ENCODE measurements at regions of chr1 and their contacts with region 1.

Region 1: DNA sequence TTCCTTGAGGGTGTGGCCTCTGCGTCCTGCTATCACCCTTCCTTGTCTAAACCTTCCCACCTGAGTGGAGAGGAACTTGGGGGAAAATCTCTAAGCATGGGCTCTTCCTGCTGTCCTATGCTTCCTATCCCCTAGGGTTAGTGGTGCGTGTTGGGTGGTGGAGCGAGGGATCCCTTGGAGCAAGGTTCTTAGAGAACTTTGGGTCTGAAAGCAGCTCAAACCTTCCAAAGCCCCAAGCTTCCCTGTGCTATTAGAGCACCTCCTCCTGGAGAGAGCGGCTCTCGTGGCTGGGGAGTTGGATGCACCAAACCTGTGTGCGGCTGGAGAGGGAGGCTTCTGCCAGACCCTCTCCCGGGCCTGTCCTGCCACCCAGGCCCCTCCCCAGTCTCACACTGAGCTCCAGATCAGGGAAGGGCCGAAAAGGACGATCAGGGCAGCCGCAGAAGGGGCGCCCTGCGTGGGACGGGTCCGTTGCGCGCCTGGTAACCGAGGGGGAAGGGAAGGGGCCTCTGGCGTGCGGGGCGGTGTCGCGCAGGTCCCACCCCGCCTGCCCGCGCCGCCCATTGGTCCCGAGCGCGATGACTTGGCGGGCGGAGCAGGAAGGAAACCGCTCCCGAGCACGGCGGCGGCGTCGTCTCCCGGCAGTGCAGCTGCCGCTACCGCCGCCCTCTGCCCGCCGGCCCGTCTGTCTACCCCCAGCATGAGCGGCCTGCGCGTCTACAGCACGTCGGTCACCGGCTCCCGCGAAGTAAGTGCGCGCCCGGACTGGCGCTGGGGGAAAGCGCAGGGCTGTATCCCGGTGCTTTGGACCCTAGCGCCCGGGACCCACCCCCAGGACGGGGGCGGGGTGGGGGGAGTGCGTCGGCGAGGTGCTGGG is at the start of gene SH3BGRL3:
- DNase-seq: peak; percentile 76
- ATAC-seq: peak; percentile 71
- H3K4me3 Mint-ChIP-seq: peak within 1 kb of the TSS; percentile 85
- H3K27ac Mint-ChIP-seq: peak within 1 kb of the TSS; percentile 78
- H3K4me1 Mint-ChIP-seq: peaks cover 40% of the 10 kb centered on the region
- H3K27me3 Mint-ChIP-seq: no peaks in the 10 kb centered on the region
- CTCF ChIP-seq: no peak
- total RNA-seq, gene SH3BGRL3: 70.8 to 92.9 TPM (median 92.3 TPM) in 3 replicates

Region 2: DNA sequence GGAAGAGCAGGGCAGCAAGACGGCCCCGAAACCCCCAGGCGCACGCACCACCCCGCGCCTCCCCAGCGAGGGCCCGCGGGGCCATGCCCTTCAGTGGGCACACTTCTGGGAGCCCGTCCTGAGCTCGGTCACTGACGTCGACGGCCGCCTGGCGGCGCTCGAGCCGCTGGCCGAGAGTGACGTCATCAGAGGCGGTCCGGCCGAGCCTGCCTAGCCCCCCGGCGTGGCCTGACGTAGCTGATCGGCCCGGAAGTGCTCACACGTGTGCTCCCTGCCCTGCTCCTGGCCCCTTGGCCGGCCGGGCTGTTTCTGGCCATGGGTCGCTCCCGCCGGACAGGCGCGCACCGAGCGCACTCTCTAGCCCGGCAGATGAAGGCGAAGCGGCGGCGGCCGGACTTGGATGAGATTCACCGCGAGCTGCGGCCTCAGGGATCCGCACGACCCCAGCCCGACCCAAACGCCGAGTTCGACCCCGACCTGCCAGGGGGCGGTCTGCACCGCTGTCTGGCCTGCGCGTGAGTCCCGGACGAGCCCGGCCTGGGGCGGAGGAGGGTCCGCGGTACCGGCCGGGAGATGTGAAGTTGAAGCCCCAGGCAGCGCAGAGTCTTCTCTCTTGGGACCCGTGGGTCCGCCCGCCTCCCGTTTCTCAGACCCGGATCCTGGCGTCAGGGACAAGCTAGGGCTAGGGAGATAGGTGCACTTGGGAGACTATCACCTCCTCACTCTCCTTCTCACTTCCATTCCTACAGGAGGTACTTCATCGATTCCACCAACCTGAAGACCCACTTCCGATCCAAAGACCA is 109.8 kb before region 1 on chr1 and contains the start of gene ZNF593:
- CTCF ChIA-PET with region 1: interaction called, 18 read pairs
- POLR2A ChIA-PET with region 1: no interaction called
- DNase-seq: peak; percentile 92
- ATAC-seq: peak; percentile 76
- H3K4me3 Mint-ChIP-seq: peak within 1 kb of the TSS; percentile 85
- H3K27ac Mint-ChIP-seq: peak within 1 kb of the TSS; percentile 65; the same call in 1 of the 2 replicates
- H3K4me1 Mint-ChIP-seq: peaks cover 31% of the 10 kb centered on the region
- H3K27me3 Mint-ChIP-seq: peaks cover 14% of the 10 kb centered on the region
- CTCF ChIP-seq: peak; percentile 81
- total RNA-seq, gene ZNF593: 39.6 to 49.1 TPM (median 43.3 TPM) in 3 replicates

Measured in WTC11 (cell line).